ENCODE measurements at regions of chr10 and their contacts with region 1.

Region 1: DNA sequence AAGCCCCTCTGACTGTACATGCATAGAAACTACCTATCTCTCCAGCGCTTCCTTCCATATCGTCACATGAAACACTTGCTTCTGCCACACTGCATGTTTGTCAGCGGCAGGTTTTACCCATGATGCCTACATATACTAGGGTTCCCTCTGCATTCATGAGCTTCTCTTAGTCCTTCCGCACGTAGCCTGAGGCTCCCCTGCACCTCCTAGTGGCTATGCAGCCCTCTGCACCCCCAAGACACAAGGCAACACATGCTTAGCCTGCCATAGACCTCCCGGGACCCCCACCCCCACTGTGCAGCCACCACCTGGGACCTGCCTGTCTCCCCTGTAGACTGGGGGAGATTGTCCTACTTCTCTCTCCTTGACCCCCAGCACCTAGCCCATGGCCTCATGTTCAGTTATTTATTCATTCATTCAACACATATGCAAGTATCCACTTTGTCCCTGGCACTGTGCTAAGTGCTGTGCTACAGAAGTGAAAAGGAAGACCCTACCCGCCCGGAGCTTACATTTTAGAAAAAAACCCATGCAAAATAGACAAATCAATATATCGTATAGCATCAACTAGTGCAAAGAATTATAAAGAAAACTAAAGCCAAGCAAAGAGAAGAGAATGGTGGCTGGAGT is 23.5 kb downstream of the TMEM273 start:
- DNase-seq: peak; percentile 84
- H3K4me3 Mint-ChIP-seq: no peak overlapping the region
- H3K27ac Mint-ChIP-seq: peak overlapping the region; percentile 12
- H3K4me1 Mint-ChIP-seq: peaks cover 25% of the 10 kb centered on the region
- H3K27me3 Mint-ChIP-seq: peaks cover 2% of the 10 kb centered on the region

Region 2: GRCh38 chr10:48551861-48552591 is 612.6 kb before region 1 on chr10:
- intact Hi-C with region 1: loop called (anchors 5 kb)
- DNase-seq: no peak
- H3K4me3 Mint-ChIP-seq: no peak overlapping the region
- H3K27ac Mint-ChIP-seq: no peak overlapping the region
- H3K4me1 Mint-ChIP-seq: no peaks in the 10 kb centered on the region
- H3K27me3 Mint-ChIP-seq: no peaks in the 10 kb centered on the region

Region 3: DNA sequence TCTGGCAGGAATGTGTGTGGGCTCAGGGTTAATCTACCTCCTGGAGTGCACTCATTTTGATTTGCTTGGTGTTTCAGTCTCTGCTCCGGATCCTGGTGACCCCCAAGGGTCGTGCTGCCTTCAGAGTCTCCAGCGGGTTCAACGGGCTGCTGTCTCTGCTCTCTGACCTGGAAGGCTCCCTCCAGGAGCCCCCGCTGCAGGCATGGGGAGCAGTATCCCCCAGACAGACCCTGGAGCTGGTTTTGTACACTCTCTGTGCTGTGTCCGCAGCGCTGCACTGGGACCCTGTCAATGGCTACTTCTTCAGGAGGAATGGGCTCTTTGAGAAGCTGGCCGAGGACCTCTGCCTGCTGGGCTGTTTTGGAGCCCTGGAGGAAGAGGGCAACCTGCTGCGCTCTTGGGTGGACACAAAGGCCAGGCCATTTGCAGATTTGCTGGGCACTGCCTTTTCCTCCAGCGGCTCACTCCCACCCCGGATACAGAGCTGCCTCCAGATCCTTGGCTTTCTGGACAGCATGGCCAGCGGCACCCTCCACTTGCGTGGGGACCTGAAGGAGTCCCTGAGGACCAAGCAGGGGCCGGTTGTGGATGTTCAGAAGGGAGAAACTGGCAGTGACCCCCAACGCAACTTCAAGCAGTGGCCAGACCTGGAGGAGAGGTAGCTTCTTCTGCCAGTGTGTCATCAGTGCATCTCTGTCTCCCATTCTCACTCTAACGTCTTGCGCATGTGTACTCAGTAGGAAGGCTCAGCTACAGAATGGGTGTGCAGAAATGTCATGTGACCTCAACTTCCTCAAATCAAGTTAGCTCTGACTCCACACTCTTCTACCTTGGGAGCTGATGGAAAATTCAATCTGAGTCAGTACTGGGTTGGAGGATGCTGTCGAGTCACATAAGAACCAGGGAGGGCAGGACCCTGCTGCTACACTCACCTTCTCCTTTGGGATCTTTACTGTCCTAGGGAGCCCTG is 421.5 kb before region 1 on chr10:
- intact Hi-C with region 1: no loop called
- DNase-seq: no peak
- H3K4me3 Mint-ChIP-seq: no peak overlapping the region
- H3K27ac Mint-ChIP-seq: no peak overlapping the region
- H3K4me1 Mint-ChIP-seq: no peaks in the 10 kb centered on the region
- H3K27me3 Mint-ChIP-seq: no peaks in the 10 kb centered on the region

Region 4: GRCh38 chr10:49104323-49104722 is 60.4 kb before region 1 on chr10:
- intact Hi-C with region 1: no loop called
- DNase-seq: no peak
- H3K4me3 Mint-ChIP-seq: no peak overlapping the region
- H3K27ac Mint-ChIP-seq: no peak overlapping the region
- H3K4me1 Mint-ChIP-seq: no peaks in the 10 kb centered on the region
- H3K27me3 Mint-ChIP-seq: peaks cover 16% of the 10 kb centered on the region